ENCODE measurements at regions of chr9 and their contacts with region 1.

Region 1: GRCh38 chr9:113876151-113876992 is at the start of gene ZNF618:
- DNase-seq: peak; percentile 37
- ATAC-seq: peak; percentile 60
- H3K4me3 Mint-ChIP-seq: peak within 1 kb of the TSS; percentile 90
- H3K27ac Mint-ChIP-seq: peak within 1 kb of the TSS; percentile 67
- H3K4me1 Mint-ChIP-seq: peaks cover 6% of the 10 kb centered on the region
- H3K27me3 Mint-ChIP-seq: peaks cover 2% of the 10 kb centered on the region
- CTCF ChIP-seq: no peak
- total RNA-seq, gene ZNF618: 0.22 and 0.67 TPM in 2 replicates

Region 2: GRCh38 chr9:113682297-113682771 is 194.0 kb before region 1 on chr9:
- CTCF ChIA-PET with region 1: no interaction called
- POLR2A ChIA-PET with region 1: no interaction called
- intact Hi-C with region 1: loop called (anchors 5 kb)
- DNase-seq: no peak
- ATAC-seq: no peak
- H3K4me3 Mint-ChIP-seq: no peak overlapping the region
- H3K27ac Mint-ChIP-seq: no peak overlapping the region
- H3K4me1 Mint-ChIP-seq: peaks cover 2% of the 10 kb centered on the region
- H3K27me3 Mint-ChIP-seq: peaks cover 48% of the 10 kb centered on the region
- CTCF ChIP-seq: no peak

Region 3: GRCh38 chr9:113807173-113808061 is 69.0 kb before region 1 on chr9:
- CTCF ChIA-PET with region 1: no interaction called
- POLR2A ChIA-PET with region 1: no interaction called
- intact Hi-C with region 1: loop called (anchors 1 kb)
- DNase-seq: no peak
- ATAC-seq: no peak
- H3K4me3 Mint-ChIP-seq: no peak overlapping the region
- H3K27ac Mint-ChIP-seq: no peak overlapping the region
- H3K4me1 Mint-ChIP-seq: peaks cover 7% of the 10 kb centered on the region
- H3K27me3 Mint-ChIP-seq: peaks cover 5% of the 10 kb centered on the region
- CTCF ChIP-seq: peak; percentile 42

Region 4: DNA sequence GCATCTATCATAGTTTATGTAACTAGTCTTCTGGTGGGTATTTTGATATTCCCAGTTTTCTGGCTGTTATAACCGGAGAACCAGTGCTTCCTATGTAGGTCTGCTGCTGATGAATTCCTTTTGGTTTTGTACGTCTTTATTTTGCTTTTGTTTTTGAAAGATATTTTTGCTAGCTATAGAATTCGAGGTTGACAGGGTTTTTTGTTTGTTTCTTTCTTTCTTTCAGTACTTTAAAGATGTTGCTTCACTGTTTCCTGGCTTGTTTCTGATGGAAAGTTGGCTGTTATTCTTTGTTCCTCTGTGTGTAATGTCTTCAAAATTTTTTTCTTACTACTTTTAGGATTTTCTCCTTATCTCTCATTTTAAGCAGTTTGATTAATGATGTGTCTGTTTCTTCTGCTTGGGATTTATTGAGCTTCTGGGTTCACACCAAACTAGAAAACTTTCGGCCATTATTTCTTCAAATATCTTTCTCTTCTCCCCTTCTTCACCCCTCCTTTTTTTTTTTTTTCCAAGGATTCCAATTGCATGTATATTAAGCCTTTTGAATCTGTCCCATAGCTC is 27.2 kb after region 1 on chr9:
- CTCF ChIA-PET with region 1: no interaction called
- POLR2A ChIA-PET with region 1: no interaction called
- intact Hi-C with region 1: loop called (anchors 2 kb)
- DNase-seq: no peak
- ATAC-seq: no peak
- H3K4me3 Mint-ChIP-seq: no peak overlapping the region
- H3K27ac Mint-ChIP-seq: no peak overlapping the region
- H3K4me1 Mint-ChIP-seq: no peaks in the 10 kb centered on the region
- H3K27me3 Mint-ChIP-seq: peaks cover 2% of the 10 kb centered on the region
- CTCF ChIP-seq: no peak